ENCODE measurements at regions of chr12 and their contacts with region 1.

Region 1: GRCh38 chr12:38689704-38690103 is 215.7 kb downstream of the CPNE8 start:
- ATAC-seq: peak in 5 of 8 experiments; percentile 32 to 83 (median 43)
- H3K4me3 ChIP-seq: no peak overlapping the region
- H3K27ac ChIP-seq: no peak overlapping the region
- H3K4me1 ChIP-seq: no peaks in the 10 kb centered on the region

Region 2: DNA sequence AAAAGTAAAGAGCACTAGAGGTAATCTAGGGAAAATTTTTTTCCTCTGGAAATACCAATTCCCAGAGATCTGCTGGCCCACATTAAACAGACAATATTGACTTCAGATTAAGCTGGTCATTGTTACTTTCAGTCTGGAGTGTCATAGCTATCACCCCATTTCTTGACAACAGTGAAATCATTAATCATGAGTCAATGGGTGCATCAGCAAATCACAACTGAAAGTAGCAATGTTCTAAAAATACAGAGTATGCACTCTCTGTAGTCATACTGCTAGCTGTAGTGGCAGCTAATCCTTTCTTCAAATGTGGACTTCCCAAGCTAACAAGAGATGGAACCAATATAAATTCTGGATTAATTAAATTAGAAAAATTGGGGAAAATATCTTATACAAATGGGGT is 85.8 kb after region 1 on chr12:
- in situ Hi-C with region 1: loop called in 1 of 9 experiments (anchors 25 kb)
- ATAC-seq: peak in 1 of 8 experiments; percentile 53
- H3K4me3 ChIP-seq: no peak overlapping the region
- H3K27ac ChIP-seq: no peak overlapping the region
- H3K4me1 ChIP-seq: no peaks in the 10 kb centered on the region

Measured in motor neuron (in vitro differentiated cells).